MCF 10A (cell line): ENCODE measurements at regions of chr10 and their contacts with region 1.

Region 1: GRCh38 chr10:47024399-47025252 is 113.4 kb downstream of the PTPN20 start:
- DNase-seq: peak; percentile 67
- H3K4me3 Mint-ChIP-seq: no peak overlapping the region
- H3K27ac Mint-ChIP-seq: no peak overlapping the region
- H3K4me1 Mint-ChIP-seq: no peaks in the 10 kb centered on the region
- H3K27me3 Mint-ChIP-seq: no peaks in the 10 kb centered on the region
- CTCF ChIP-seq: peak; percentile 87

Region 2: DNA sequence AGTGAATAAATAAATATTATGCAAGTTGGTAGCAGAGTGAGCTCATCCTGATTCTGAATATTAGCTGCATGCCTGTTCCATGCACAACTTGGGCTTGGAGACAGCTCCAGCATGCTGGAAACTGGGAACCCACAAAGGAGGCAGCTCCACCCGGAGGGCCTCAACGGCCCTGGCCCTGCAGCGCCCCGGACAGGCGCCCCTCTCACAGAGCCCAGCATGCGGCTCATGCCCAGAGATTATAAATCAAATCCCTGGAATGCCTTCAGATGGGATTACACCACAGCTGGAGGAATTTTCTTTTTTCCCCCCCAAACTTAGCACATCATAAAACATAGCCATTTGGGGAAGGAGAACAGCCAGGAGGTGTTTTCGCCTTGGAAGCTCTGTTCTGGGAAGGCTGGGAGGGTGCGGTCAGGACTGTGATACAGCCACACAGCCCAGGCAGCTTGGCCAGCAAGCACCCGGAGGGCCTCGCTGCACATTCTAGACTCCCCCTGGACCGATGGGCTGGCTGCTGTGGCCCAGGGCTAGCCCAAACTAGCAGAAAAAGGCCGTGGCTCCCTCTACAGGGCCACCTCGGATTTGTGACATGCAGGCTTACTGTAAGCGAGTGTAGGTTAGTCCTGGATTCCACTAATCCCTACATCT is 11.0 kb before region 1 on chr10:
- CTCF ChIA-PET with region 1: interaction called, 36 read pairs
- POLR2A ChIA-PET with region 1: interaction called, 3 read pairs
- intact Hi-C with region 1: no loop called
- DNase-seq: no peak
- H3K4me3 Mint-ChIP-seq: no peak overlapping the region
- H3K27ac Mint-ChIP-seq: no peak overlapping the region
- H3K4me1 Mint-ChIP-seq: no peaks in the 10 kb centered on the region
- H3K27me3 Mint-ChIP-seq: peaks cover 51% of the 10 kb centered on the region
- CTCF ChIP-seq: no peak

Region 3: DNA sequence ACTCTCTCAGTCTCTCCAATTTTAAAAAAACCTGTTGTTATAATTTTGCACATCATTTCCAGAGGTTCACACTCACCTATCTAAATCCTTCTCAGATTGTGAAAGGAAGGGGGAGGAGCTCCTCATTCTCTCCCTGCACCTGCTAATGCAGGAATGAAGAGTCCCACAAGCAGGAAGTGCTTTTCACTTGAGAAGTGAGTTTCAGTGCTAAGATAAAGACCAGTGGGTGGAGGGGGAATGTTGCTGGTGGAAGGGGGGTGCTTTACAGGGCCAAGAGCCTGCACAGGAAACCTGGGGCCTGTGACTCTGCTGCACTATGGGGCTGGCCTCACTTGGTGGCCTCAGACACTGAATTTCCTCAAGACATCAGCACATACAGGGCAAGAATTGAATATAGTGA is 63.0 kb after region 1 on chr10:
- CTCF ChIA-PET with region 1: no interaction called
- POLR2A ChIA-PET with region 1: no interaction called
- intact Hi-C with region 1: no loop called
- DNase-seq: no peak
- H3K4me3 Mint-ChIP-seq: no peak overlapping the region
- H3K27ac Mint-ChIP-seq: no peak overlapping the region
- H3K4me1 Mint-ChIP-seq: no peaks in the 10 kb centered on the region
- H3K27me3 Mint-ChIP-seq: peaks cover 12% of the 10 kb centered on the region
- CTCF ChIP-seq: no peak

Region 4: GRCh38 chr10:47311932-47312662 is 287.5 kb after region 1 on chr10:
- CTCF ChIA-PET with region 1: interaction called, 131 read pairs
- POLR2A ChIA-PET with region 1: interaction called, 6 read pairs
- intact Hi-C with region 1: loop called (anchors 1 kb)
- DNase-seq: peak; percentile 72
- H3K4me3 Mint-ChIP-seq: no peak overlapping the region
- H3K27ac Mint-ChIP-seq: no peak overlapping the region
- H3K4me1 Mint-ChIP-seq: no peaks in the 10 kb centered on the region
- H3K27me3 Mint-ChIP-seq: peaks cover 28% of the 10 kb centered on the region
- CTCF ChIP-seq: peak; percentile 97

Region 5: GRCh38 chr10:47340608-47341170 is 316.1 kb after region 1 on chr10:
- CTCF ChIA-PET with region 1: interaction called, 5 read pairs
- POLR2A ChIA-PET with region 1: no interaction called
- intact Hi-C with region 1: loop called (anchors 10 kb)
- DNase-seq: peak; percentile 60
- H3K4me3 Mint-ChIP-seq: no peak overlapping the region
- H3K27ac Mint-ChIP-seq: no peak overlapping the region
- H3K4me1 Mint-ChIP-seq: no peaks in the 10 kb centered on the region
- H3K27me3 Mint-ChIP-seq: peaks cover 51% of the 10 kb centered on the region
- CTCF ChIP-seq: peak; percentile 93

Region 6: GRCh38 chr10:47454008-47454779 is 429.6 kb after region 1 on chr10:
- CTCF ChIA-PET with region 1: interaction called, 11 read pairs
- POLR2A ChIA-PET with region 1: no interaction called
- intact Hi-C with region 1: no loop called
- DNase-seq: no peak
- H3K4me3 Mint-ChIP-seq: no peak overlapping the region
- H3K27ac Mint-ChIP-seq: no peak overlapping the region
- H3K4me1 Mint-ChIP-seq: peaks cover 19% of the 10 kb centered on the region
- H3K27me3 Mint-ChIP-seq: peaks cover 17% of the 10 kb centered on the region
- CTCF ChIP-seq: no peak